Dendritic cell treated with granulocyte-macrophage colony-stimulating factor and Interleukin-4, amounts not matched to agents 40 ng/mL and 50 ng/mL, for 4 days (primary cell): ENCODE measurements at regions of chr19 and their contacts with region 1.

Region 1: DNA sequence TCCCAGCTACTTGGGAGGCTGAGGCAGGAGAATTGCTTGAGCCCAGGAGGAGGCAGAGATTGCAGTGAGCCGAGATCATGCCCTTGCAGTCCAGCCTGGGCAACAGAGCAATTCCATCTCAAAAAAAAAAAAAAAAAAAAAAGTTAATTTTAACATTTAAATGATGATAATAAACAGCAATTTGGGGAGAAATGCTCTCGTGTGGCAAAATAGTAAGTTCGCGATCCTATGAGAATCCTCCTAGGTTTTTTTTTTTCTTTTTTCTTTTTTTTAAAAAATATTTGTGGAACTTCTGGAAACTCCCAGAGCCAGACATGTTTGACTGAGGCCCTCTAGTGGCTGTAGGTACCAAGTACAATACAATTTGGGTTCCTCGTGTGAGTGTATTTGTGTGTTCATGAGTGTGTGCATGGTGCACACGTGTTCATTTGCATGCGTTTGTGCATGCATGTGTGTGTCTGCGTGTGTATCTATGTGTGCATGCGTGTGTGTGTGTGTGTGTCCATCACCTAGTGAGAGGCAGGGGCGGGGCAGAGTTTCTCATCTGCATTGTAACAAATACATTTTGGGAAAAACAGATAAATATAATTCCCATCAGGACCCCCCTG is 31.2 kb downstream of the TMPRSS9 start:
- H3K4me3 Mint-ChIP-seq: no peak overlapping the region
- H3K27ac Mint-ChIP-seq: no peak overlapping the region
- H3K4me1 Mint-ChIP-seq: peaks cover 27% of the 10 kb centered on the region
- H3K27me3 Mint-ChIP-seq: peaks cover 24% of the 10 kb centered on the region

Region 2: DNA sequence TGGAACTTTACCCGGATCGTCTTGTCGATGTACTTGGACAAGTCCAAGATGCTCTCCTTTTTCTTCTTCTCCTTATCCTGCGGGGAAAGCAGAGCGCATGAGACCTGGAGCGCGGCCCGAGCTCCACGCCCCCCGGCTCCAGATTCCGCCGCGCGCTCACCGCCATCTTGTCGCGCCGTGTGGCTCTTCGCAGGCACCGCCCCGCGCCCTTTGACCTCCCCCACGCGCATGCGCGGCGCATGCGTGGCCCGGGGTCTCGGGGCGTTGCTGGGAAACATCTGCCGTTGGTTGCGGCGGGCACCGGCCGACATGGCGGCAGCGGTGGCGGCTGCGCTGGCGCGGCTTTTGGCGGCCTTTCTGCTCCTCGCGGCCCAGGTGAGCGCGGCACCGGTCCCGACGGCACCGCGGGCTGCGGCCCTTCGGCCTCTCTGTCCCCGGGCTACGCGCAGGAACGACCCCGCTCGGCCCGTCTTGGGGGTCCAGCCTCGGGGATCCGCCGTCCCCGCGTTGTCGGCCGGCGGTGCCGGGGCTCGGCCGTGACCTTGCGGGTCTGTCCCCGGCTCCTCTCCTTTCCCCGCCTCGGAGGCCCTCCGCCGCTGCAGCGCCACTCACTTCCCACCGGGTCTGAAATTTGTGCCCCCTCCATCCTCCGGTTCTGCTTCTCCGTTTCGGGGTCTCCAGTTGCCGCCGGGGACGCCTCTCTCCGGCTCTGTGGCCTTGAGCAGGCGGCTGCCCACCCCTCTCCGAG is 62.6 kb before region 1 on chr19 and contains the starts of genes LSM7 and SPPL2B:
- intact Hi-C with region 1: loop called (anchors 5 kb)
- H3K4me3 Mint-ChIP-seq: peak within 1 kb of the TSS; percentile 98
- H3K27ac Mint-ChIP-seq: peak within 1 kb of the TSS; percentile 96
- H3K4me1 Mint-ChIP-seq: peaks cover 81% of the 10 kb centered on the region
- H3K27me3 Mint-ChIP-seq: peaks cover 2% of the 10 kb centered on the region

Region 3: DNA sequence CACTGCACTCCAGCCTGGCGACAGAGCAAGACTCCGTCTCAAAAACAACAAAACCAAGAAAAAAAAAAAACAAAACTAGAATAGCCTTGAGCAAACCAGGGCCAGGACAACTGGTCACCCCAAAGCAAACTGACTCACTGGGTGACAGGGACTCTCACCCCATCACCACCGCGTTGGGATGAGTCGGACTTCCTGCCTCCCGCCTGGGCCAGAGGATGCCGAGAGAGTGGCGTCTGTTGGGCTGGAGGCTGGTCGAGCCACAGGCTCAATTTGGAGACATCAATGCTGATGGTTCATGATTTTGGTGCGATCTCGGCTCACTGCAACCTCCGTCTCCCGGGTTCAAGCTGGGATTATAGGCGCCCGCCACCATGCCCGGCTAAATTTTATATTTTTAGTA is 19.6 kb before region 1 on chr19:
- intact Hi-C with region 1: no loop called
- H3K4me3 Mint-ChIP-seq: no peak overlapping the region
- H3K27ac Mint-ChIP-seq: no peak overlapping the region
- H3K4me1 Mint-ChIP-seq: peaks cover 14% of the 10 kb centered on the region
- H3K27me3 Mint-ChIP-seq: peaks cover 40% of the 10 kb centered on the region